ENCODE measurements at regions of chr3 and their contacts with region 1.

Region 1: DNA sequence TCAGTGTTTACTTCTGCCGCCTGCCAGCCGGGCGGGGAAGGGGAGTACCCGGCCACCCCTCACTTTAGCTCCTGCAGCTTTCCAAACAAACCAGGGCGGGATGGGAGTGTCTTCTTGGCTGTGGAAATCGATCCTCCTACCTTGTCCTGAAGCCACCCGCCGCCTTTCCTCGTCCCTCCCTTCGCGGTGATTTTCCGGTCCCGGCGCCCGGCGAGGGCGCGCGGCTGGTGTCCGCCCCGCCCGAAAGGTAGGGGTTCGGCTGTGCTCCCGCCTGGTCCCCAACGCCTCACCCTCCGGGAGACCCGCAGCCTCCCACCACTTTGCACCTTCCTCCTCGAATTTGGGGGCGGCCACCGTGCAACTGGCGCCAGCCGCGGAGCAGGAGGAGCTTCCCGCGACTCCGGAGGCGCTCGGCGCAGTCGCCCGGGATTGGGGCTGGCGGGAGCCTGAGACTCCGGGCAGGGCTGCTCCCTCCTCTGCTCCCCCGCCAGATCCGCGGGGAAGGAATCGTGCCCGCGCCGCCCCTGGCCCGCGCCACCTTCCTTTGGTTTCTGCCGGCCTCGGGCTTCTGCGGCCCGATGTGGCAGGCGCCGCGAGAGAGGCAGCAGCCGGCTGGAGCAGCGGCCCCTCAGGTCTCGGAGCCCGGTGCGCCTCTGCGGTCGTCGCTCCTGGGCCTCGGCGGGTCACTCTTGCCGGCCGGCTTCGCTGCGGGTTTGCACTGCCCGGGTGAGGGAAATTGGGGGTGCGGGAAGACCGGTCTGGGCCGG is 30.7 kb upstream of the ST3GAL6 start:
- DNase-seq: peak; percentile 54 to 95 (median 68)

Region 2: DNA sequence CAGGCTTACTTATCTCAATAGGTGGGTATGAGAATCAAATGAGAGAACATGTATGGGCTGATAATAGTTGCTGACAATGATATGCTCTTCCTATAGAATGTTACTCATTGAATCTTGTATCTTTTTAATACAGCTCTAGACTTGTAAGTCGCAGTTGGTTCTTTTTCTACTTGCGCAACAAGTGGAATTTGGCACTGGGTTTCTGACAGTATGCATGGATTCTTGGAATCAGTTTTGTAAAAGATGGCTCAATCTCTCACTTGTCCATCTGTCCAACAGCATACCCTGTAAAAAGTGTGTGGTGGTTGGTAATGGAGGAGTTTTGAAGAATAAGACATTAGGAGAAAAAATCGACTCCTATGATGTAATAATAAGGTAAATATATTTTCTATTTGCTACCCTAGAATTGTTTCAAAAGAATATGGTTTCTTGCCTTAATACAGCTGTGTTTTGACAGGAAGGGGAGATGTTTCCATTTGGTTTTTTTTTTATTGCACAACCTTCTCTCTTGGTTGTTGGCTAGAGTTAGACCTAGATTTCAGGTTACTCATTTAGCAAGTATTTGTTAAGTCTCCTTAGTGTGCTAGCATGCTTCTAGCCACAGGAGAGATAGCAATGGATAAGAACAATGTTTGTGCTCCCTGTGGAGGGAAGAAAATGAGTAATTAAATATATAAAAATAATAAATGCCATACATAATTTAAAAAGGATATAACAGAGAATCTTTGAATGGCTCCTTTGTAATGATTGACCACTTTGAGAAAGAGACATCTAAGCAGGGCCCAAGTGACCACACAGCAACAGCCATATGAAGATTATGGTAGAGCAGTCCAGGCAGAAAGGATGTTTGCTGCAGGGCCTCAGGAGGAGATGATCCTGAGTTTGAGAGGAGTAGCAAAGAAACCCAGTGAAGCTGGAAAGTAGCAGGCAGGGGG is 52.5 kb after region 1 on chr3:
- intact Hi-C with region 1: loop called (anchors 5 kb)
- DNase-seq: no peak

Region 3: DNA sequence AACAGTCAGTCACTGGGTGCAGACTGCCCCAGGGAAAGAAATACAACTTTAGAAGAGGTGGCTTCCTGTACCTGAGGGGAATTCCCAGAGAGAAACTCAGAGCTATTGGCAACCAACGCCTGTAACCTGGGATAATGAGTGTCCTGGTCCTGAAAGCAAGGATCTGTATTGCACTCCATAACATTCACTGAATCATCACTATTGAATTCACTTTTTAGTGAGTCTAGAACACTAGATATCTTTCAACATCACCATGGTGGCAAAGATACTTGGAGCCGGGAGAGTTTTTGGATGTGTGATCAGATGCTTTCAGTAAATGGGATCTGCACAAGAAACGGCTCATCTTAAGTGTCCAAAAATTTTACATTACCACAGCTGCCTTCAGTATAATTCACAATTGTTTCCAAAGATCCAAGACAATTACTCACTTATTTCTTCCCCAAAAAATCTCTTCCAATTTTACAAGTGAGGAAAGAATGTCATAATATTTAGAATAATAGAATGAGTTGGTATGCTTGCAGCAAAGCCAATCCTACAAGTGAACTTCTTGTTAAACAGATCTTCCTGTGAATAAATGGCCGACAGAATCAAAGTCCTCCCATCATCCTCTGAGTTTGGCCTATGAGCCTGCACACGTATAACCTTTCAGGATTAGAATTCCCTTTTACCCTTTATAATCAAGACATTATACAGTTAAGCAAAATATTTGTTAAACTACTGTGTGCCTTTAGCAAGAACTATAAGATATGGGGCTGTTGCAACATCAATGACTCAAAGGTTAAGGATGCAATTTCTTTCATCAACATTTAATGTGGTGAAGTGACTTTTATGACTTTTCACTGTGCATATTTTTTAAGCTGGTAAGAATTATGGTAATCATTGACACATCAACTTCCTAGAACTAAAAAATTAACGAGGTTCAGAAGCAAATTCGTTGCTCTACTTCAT is 662.6 kb after region 1 on chr3:
- intact Hi-C with region 1: no loop called
- DNase-seq: no peak

Measured in posterior cingulate gyrus (tissue), 11 donors.